ENCODE measurements at regions of chr14 and their contacts with region 1.

Region 1: GRCh38 chr14:39102969-39103957 is at the start of gene SEC23A:
- H3K4me3 Mint-ChIP-seq: peak within 1 kb of the TSS; percentile 97
- H3K27ac Mint-ChIP-seq: peak within 1 kb of the TSS; percentile 92
- H3K4me1 Mint-ChIP-seq: peaks cover 35% of the 10 kb centered on the region
- H3K27me3 Mint-ChIP-seq: no peaks in the 10 kb centered on the region

Region 2: GRCh38 chr14:38522724-38523123 is 580.5 kb before region 1 on chr14:
- intact Hi-C with region 1: no loop called
- H3K4me3 Mint-ChIP-seq: no peak overlapping the region
- H3K27ac Mint-ChIP-seq: no peak overlapping the region
- H3K4me1 Mint-ChIP-seq: no peaks in the 10 kb centered on the region
- H3K27me3 Mint-ChIP-seq: no peaks in the 10 kb centered on the region

Region 3: GRCh38 chr14:38971255-38971921 is 131.9 kb before region 1 on chr14:
- intact Hi-C with region 1: no loop called
- H3K4me3 Mint-ChIP-seq: no peak overlapping the region
- H3K27ac Mint-ChIP-seq: no peak overlapping the region
- H3K4me1 Mint-ChIP-seq: no peaks in the 10 kb centered on the region
- H3K27me3 Mint-ChIP-seq: no peaks in the 10 kb centered on the region

Region 4: GRCh38 chr14:39114073-39114838 is 11.0 kb after region 1 on chr14 and contains the start of gene GEMIN2:
- intact Hi-C with region 1: loop called (anchors 1 kb)
- H3K4me3 Mint-ChIP-seq: peak within 1 kb of the TSS; percentile 94
- H3K27ac Mint-ChIP-seq: peak within 1 kb of the TSS; percentile 82
- H3K4me1 Mint-ChIP-seq: peaks cover 9% of the 10 kb centered on the region
- H3K27me3 Mint-ChIP-seq: peaks cover 3% of the 10 kb centered on the region

Region 5: DNA sequence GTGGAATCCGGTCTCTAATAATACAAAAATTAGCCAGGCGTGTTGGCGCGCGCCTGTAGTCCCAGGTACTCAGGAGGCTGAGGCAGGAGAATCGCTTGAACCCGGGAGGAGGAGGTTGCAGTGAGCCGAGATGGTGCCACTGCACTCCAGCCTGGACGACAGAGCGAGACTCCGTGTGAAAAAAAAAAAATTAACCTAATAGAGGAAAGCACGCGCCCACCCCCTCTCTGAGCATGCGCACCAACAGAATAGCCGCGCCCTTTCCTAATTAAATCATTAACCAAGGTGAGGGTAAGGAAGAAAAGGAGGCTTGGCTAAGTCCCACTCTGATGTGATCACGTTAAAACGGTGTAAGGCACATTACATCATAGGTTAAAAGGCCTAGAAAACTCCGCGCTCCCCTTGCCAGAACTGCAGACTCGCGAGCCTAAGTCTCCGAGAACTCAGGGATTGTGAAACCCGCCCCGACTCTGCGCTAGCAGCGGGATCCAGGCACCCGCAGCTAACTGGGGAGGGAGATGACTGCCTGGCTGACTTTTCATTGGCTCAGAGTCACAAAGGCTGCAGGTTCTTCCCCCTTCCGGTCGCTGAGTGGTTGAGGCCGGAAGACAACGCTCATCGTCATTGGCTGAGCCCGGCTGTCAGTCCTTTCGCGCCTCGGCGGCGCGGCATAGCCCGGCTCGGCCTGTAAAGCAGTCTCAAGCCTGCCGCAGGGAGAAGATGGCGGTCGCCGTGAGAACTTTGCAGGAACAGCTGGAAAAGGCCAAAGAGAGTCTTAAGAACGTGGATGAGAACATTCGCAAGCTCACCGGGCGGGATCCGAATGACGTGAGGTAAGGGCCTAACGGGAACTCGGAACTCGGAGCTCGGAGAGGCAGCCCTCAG is 71.5 kb after region 1 on chr14 and contains the start of gene PNN:
- intact Hi-C with region 1: loop called (anchors 2 kb)
- H3K4me3 Mint-ChIP-seq: peak within 1 kb of the TSS; percentile 92
- H3K27ac Mint-ChIP-seq: peak within 1 kb of the TSS; percentile 95
- H3K4me1 Mint-ChIP-seq: peaks cover 21% of the 10 kb centered on the region
- H3K27me3 Mint-ChIP-seq: no peaks in the 10 kb centered on the region